Caco-2 (cell line): ENCODE measurements at regions of chr1 and their contacts with region 1.

Region 1: DNA sequence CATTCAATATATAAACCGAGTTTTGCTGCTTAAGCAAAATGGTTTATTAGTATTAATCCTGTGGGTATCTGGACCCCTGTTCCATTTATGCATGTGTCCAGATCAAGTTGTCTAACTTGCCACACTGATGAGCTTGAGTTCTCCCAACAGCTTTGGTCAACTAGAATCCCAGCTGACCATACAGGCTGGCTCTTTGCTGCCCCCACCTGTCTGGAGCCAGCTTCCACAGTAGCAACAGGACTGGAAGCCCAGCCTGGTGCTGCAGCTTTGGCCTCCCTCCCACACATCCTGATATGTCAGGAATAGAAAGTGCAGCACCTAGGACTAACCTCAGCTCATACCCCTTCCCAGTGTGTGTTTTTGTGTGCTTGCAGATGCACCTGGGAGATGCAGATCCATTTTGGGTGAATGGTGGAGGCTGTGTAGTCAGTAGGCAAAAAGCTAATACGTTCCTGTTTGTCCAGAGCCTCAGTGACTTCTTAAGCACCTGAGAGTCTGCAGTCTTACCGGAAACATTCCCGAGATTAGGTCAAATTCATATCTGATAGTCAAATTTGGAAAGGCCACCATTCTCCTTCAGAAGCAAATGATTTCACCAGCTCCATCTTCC is 40.9 kb upstream of the BEND5 start:
- DNase-seq: peak; percentile 62 to 74
- H3K4me3 ChIP-seq: no peak overlapping the region
- H3K4me3 Mint-ChIP-seq: no peak overlapping the region
- H3K27ac Mint-ChIP-seq: no peak overlapping the region
- H3K4me1 ChIP-seq: no peaks in the 10 kb centered on the region
- H3K4me1 Mint-ChIP-seq: no peaks in the 10 kb centered on the region
- H3K27me3 ChIP-seq: no peaks in the 10 kb centered on the region
- H3K27me3 Mint-ChIP-seq: no peaks in the 10 kb centered on the region
- CTCF ChIP-seq: peak; percentile 63 to 89

Region 2: DNA sequence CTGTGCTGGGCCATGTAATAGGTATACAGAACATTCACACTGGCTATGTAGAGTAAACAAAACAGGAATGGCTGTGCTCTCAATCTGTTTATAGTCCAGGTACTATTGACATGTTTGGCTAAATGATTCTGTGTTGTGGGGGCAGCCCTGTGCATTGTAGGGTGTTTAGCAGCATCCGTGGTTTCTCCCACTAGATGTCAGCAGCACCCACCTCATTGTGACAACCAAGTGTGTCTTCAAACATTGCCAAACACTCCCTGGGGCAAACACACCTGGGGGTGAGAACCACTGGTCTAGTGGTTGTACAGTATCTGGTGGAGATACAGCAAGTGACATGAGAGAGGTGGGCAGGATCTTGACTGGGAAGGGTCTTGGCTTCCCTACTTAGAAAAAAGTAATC is 265.2 kb before region 1 on chr1:
- CTCF ChIA-PET with region 1: no interaction called
- POLR2A ChIA-PET with region 1: no interaction called
- intact Hi-C with region 1: loop called (anchors 1 kb)
- DNase-seq: peak; percentile 41 to 46
- H3K4me3 ChIP-seq: no peak overlapping the region
- H3K4me3 Mint-ChIP-seq: no peak overlapping the region
- H3K27ac Mint-ChIP-seq: no peak overlapping the region
- H3K4me1 ChIP-seq: no peaks in the 10 kb centered on the region
- H3K4me1 Mint-ChIP-seq: no peaks in the 10 kb centered on the region
- H3K27me3 ChIP-seq: no peaks in the 10 kb centered on the region
- H3K27me3 Mint-ChIP-seq: peaks cover 28% of the 10 kb centered on the region
- CTCF ChIP-seq: peak in 1 of 2 experiments; percentile 27

Region 3: DNA sequence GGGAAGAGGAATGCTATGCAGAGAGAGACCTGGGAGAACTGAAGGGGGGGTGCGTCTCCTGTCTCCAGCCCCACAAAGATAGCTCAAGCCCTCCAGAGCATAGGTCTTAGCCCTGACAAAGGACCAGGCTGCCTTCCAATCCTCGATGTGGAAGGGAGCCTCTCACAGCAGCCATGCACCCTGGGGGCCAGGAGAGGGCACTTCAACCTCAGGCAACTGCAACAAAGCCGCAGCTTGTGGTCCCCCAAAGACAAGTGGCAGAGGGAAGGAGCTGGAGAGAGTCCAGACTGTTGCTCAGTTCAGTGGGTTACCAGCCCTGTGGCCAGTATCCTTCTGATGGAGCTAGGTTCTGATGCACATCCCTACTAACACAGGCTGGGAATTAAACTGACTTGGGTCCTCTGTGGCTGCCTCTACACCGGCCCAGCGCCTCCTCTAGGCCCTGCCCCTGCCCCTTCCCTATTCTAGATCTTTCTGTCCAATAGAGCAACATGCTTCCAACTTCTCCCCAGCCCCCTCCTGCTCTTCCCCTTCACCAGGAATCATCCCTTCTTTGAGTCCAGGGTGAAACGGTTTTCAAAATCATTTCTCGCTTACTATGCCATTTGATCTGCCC is 244.9 kb before region 1 on chr1:
- CTCF ChIA-PET with region 1: interaction called, 33 read pairs
- POLR2A ChIA-PET with region 1: no interaction called
- intact Hi-C with region 1: loop called (anchors 1 kb)
- DNase-seq: peak; percentile 65
- H3K4me3 ChIP-seq: no peak overlapping the region
- H3K4me3 Mint-ChIP-seq: no peak overlapping the region
- H3K27ac Mint-ChIP-seq: no peak overlapping the region
- H3K4me1 ChIP-seq: no peaks in the 10 kb centered on the region
- H3K4me1 Mint-ChIP-seq: no peaks in the 10 kb centered on the region
- H3K27me3 ChIP-seq: no peaks in the 10 kb centered on the region; the same call in none of the 2 replicates
- H3K27me3 Mint-ChIP-seq: peaks cover 13% of the 10 kb centered on the region
- CTCF ChIP-seq: peak; percentile 58 to 81

Region 4: DNA sequence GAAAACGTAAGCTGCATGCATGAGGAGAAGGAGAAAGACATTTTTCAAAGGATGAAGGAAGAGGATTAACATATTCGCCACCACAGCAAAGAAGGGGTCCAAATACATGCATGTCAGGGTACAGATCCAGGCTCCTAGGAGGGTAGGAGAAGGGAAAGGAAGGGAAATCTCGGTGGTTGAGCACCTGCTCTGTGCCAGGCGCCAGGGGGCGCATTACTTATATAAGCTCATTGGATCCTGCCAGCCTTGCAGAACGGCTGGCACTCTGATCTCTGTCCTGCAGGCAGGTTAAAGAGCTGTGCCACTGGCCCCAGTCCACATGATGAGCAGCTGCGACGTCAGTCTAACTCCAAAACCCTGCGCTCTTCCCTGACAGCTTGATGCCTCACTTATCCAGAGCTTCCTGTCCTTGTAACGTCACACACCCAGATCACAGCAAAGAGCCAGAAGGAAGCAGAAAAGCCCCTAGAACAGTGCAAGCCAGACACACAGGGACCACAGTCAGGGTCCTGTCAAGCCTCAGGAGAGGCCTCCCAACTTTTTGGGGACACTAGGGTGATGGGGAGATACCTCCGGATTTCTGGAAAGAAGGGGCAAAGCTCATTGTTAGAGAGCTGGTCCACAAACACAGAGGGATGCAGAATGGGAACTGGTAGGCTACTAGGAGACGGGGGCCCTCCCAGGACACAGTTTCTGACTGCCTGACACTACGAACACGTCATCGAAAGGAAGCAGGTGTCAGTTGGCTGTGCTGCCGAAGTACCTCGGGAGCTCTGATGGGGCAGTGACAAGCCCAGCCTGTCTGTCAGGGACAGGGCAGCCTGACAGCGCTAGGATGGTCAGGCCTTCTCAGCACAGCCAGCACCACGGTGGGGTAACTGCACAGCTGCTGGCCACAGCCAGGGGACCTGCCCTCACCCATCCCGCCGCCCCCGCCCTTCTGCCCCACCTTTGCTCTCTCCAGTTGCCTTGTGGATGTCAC is 140.0 kb before region 1 on chr1:
- CTCF ChIA-PET with region 1: interaction called, 68 read pairs
- POLR2A ChIA-PET with region 1: no interaction called
- intact Hi-C with region 1: loop called (anchors 1 kb)
- DNase-seq: peak; percentile 44 to 58
- H3K4me3 ChIP-seq: no peak overlapping the region
- H3K4me3 Mint-ChIP-seq: no peak overlapping the region
- H3K27ac Mint-ChIP-seq: no peak overlapping the region
- H3K4me1 ChIP-seq: no peaks in the 10 kb centered on the region
- H3K4me1 Mint-ChIP-seq: no peaks in the 10 kb centered on the region
- H3K27me3 ChIP-seq: no peaks in the 10 kb centered on the region
- H3K27me3 Mint-ChIP-seq: no peaks in the 10 kb centered on the region
- CTCF ChIP-seq: peak; percentile 63 to 66

Region 5: DNA sequence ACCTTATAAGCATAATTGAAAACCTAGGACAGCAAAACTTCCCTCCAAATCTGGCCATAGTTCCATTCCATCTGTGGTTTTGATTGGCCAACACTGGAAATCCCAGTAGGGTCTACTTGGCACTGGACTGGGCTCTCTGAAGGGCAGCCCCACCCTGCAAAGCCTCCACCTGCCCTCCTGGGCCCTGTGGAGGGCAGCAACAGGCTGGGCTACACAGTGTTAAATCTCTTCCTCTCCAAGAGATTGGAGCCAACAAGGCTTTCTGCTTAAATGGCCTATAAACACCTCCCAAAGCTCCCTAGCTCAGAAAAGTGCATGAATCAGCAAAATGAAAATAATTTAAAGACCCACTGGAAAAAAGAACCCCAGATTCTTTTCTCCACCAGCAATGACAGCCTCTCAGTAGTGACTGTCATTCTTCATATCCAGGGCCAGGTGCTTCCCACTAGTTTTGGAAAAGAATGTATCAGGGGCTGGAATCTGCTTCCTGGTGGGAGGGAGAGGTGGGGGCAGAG is 99.4 kb before region 1 on chr1:
- CTCF ChIA-PET with region 1: interaction called, 3 read pairs
- POLR2A ChIA-PET with region 1: no interaction called
- intact Hi-C with region 1: loop called (anchors 2 kb)
- DNase-seq: no peak
- H3K4me3 ChIP-seq: no peak overlapping the region
- H3K4me3 Mint-ChIP-seq: no peak overlapping the region
- H3K27ac Mint-ChIP-seq: no peak overlapping the region
- H3K4me1 ChIP-seq: no peaks in the 10 kb centered on the region
- H3K4me1 Mint-ChIP-seq: no peaks in the 10 kb centered on the region
- H3K27me3 ChIP-seq: no peaks in the 10 kb centered on the region
- H3K27me3 Mint-ChIP-seq: no peaks in the 10 kb centered on the region
- CTCF ChIP-seq: peak in 1 of 2 experiments; percentile 8

Region 6: DNA sequence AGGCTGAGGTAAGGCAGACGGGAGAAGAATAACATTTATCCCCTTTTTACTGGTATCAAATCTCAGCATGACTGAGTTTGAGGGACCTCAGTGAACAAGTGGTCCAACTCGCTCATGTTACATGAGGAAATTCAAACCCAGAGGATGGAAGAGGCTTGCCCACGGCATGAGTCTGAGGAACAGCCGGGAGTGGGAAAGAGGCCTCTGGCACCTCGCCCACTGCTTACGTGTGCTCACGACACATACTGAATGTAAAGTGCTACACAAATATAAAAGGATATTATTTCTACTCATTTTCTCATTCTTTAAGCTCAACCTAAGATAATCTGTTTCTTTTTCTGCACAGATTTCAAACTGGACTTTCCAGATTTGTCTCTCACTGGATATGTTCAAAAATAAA is 55.6 kb before region 1 on chr1:
- CTCF ChIA-PET with region 1: no interaction called
- POLR2A ChIA-PET with region 1: no interaction called
- intact Hi-C with region 1: loop called (anchors 5 kb)
- DNase-seq: no peak
- H3K4me3 ChIP-seq: no peak overlapping the region
- H3K4me3 Mint-ChIP-seq: no peak overlapping the region
- H3K27ac Mint-ChIP-seq: no peak overlapping the region
- H3K4me1 ChIP-seq: no peaks in the 10 kb centered on the region
- H3K4me1 Mint-ChIP-seq: no peaks in the 10 kb centered on the region
- H3K27me3 ChIP-seq: no peaks in the 10 kb centered on the region
- H3K27me3 Mint-ChIP-seq: no peaks in the 10 kb centered on the region
- CTCF ChIP-seq: no peak

Region 7: GRCh38 chr1:49013079-49013478 is 195.5 kb after region 1 on chr1:
- CTCF ChIA-PET with region 1: no interaction called
- POLR2A ChIA-PET with region 1: no interaction called
- intact Hi-C with region 1: no loop called
- DNase-seq: no peak
- H3K4me3 ChIP-seq: no peak overlapping the region
- H3K4me3 Mint-ChIP-seq: no peak overlapping the region
- H3K27ac Mint-ChIP-seq: no peak overlapping the region
- H3K4me1 ChIP-seq: no peaks in the 10 kb centered on the region
- H3K4me1 Mint-ChIP-seq: no peaks in the 10 kb centered on the region
- H3K27me3 ChIP-seq: no peaks in the 10 kb centered on the region
- H3K27me3 Mint-ChIP-seq: no peaks in the 10 kb centered on the region
- CTCF ChIP-seq: no peak